Dorsolateral prefrontal cortex (tissue), 120 donors: ENCODE measurements at regions of chr3 and their contacts with region 1.

Region 1: GRCh38 chr3:48635222-48636021 is at the start of gene SLC26A6:
- DNase-seq: peak; percentile 95 to 99 (median 96)
- H3K4me3 ChIP-seq: peak within 1 kb of the TSS; percentile 71 to 99 (median 90)
- H3K27ac ChIP-seq: peak within 1 kb of the TSS in 52 of 59 donors; percentile 18 to 89 (median 74)
- H3K27me3 ChIP-seq: no peaks in the 10 kb centered on the region
- CTCF ChIP-seq: peak in 55 of 56 donors; percentile 33 to 82 (median 62)
- total RNA-seq, gene SLC26A6: 5.6 to 28.6 (median 13.1) TPM

Region 2: DNA sequence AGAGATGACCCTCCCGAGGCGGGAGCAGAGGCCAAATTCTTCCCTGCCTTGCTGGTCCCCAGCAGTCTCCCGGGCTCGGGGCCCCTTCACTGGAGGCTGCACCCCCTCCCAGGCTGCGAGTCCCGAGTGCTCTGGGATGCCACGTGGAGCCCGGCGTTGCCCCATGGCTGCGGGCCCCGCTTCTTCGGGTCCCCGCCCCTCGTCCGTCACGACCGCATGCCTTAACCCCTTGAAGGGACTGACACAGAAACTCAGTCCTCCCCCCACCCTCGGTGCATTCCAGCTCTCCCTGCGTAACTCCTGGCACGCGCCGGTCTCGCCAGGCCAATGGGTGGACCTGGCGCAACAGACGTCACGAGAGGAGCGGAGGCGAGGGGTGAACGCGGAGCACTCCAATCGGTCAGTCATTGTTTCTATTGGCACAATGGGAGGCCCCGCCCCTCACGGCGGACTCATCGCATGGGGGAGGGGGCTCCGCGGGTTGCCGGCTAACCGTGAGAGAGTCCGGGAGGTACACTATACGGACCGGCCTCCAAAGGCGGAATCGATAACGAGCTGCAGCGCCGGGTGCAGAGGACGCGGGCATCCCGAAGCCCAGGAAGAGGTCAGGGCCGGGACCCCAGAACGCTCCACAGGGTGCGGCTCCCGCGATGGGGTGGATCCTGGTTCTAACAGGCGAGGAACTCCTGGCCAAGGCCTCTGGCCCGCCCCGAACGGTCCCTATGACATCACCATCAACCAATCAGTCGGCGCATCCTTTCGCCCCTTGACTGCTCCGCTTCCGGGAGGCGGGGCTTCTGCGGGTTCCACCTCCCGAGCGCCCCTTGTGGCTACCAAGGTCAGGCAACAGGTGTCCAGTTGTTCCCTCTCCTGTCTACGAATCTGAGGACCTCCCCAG is 28.2 kb after region 1 on chr3:
- intact Hi-C with region 1: loop called in 1 of 2 experiments (anchors 2 kb)
- DNase-seq: peak; percentile 90 to 98 (median 97)
- H3K4me3 ChIP-seq: peak overlapping the region; percentile 48 to 89 (median 71)
- H3K27ac ChIP-seq: peak overlapping the region; percentile 11 to 96 (median 88)
- H3K27me3 ChIP-seq: peaks cover 0 to 5% (median 0%) of the 10 kb centered on the region in 45 donors
- CTCF ChIP-seq: peak; percentile 44 to 93 (median 80)